ENCODE measurements at regions of chr12 and their contacts with region 1.

Region 1: GRCh38 chr12:49088190-49088931 is 6.2 kb downstream of the DHH start:
- DNase-seq: peak; percentile 88 to 89
- H3K4me3 ChIP-seq: no peak overlapping the region
- H3K27ac ChIP-seq: no peak overlapping the region
- H3K4me1 ChIP-seq: peaks cover 16 to 43% of the 10 kb centered on the region in 2 donors
- H3K27me3 ChIP-seq: peaks cover 12% of the 10 kb centered on the region
- CTCF ChIP-seq: peak; percentile 63 to 87 (median 80)
- POLR2A ChIP-seq: no peak

Region 2: DNA sequence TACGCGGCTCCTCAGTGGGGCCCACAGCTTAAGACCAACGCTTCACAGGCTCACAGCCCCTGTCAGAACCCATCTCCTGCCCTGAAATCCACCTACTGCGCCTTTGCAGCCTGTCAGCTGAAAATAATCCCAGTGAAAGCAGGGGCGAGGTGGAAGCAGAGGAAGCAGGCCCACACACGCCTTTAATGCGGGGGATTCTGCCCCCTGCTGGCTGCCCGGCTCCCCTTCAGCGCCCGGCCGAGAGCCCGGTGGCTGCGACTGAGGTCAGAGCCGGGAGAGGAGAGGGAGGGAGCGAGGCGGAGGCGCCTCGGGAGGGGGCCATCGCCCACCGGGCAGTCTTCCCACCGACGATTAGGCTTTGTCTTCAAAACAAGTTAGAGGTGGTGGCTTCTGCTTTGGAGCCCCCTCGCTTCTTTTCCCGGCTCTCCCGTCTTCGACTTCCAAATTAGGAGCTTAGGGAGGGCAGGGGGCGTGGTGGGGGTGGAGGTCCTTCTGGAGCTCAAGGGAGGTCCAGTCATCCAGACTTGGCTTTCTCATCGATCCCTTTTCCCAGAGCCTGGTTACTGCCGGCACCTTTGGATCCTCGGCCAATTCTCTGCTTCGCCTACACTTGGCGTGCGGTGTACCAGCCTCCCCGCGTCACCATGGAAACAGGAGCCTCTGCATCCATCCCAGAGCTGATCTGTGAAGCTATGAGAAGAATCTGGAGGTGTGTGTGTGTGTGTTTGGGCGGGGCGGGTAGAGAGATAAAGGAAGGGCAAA is 197.5 kb before region 1 on chr12:
- intact Hi-C with region 1: no loop called
- DNase-seq: peak; percentile 78 to 81
- H3K4me3 ChIP-seq: no peak overlapping the region
- H3K27ac ChIP-seq: no peak overlapping the region
- H3K4me1 ChIP-seq: peaks cover 0 to 8% of the 10 kb centered on the region in 2 donors
- H3K27me3 ChIP-seq: no peaks in the 10 kb centered on the region
- CTCF ChIP-seq: peak; percentile 85 to 96 (median 92)
- POLR2A ChIP-seq: no peak

Region 3: DNA sequence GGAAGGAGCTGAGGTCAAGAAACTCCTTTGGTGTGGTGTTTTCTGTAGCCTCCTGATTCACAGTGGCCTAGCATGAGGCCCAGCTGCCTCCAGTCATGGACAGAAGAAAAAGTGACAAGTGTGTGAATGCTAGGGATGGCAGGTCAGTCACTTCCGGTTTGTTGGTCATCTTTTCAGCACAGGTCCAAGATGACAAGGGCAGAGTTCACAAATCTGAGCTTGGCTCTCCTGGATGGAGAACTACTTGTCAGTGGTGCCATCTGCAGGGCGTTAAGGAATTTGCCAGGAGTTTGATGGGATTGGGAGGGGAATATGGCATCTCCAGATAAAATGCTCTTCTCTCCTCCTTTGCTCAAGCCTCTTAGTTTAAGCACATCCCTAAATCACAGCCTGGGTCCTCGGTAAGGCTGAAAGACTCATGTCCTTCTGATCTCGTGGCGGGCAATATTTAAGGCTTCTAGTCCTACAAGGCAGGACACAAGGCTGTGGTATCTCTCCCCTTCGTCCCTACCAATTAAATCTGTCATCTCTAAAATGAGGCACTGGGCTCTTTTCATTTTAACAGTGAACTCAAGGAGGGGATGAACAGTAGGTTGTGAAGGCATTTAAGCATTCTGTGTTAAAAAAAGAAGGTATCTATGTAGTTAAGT is 32.8 kb after region 1 on chr12:
- intact Hi-C with region 1: loop called (anchors 5 kb)
- DNase-seq: peak; percentile 43 to 54
- H3K4me3 ChIP-seq: no peak overlapping the region
- H3K27ac ChIP-seq: no peak overlapping the region
- H3K4me1 ChIP-seq: no peaks in the 10 kb centered on the region
- H3K27me3 ChIP-seq: no peaks in the 10 kb centered on the region
- CTCF ChIP-seq: peak in 5 of 6 experiments; percentile 20 to 60 (median 57)
- POLR2A ChIP-seq: no peak

Region 4: GRCh38 chr12:49188914-49189367 is 100.6 kb after region 1 on chr12 and contains the start of gene TUBA1A:
- intact Hi-C with region 1: no loop called
- DNase-seq: peak; percentile 63 to 65
- H3K4me3 ChIP-seq: peak within 1 kb of the TSS; percentile 63 to 82 (median 70)
- H3K27ac ChIP-seq: peak within 1 kb of the TSS; percentile 80 to 96 (median 95)
- H3K4me1 ChIP-seq: no peaks in the 10 kb centered on the region
- H3K27me3 ChIP-seq: no peaks in the 10 kb centered on the region
- CTCF ChIP-seq: no peak
- POLR2A ChIP-seq: peak in 1 of 2 donors; percentile 65
- total RNA-seq, gene TUBA1A: 24.6 to 64.4 (median 32.1) TPM